ENCODE measurements at regions of chr19 and their contacts with region 1.

Region 1: DNA sequence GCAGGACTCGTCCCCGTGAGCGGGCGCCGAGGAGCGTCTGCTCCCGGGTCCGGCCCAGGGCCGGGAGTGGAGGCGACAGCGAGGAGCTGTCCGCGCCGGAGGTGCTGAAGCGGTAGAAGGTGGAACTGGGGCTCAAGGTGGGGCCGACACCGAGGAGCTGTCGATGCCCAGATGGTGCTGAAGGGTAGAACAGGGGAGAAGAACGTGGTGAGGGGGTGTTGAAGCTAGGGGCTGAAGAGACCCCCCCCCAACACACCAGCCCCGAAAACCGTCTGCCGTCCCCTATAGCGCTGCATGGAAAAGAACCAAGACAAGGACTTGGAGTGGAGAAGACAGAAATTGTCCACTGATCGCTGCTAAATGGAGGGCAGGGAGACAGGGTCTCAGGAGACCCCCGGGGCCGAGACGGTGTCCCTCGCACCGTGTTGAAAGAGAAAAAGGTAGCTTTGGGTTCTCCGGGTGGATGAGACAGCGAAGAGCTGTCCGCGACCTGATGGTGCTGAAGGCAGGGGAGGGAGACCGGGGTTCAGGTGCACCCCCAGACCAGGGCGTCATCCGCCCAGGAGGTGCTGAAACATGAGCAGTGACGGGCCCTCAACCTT is 7.1 kb upstream of the PDE4C start:
- DNase-seq: peak; percentile 93
- ATAC-seq: peak; percentile 79
- H3K4me3 Mint-ChIP-seq: peak overlapping the region; percentile 78
- H3K27ac Mint-ChIP-seq: no peak overlapping the region
- H3K4me1 Mint-ChIP-seq: peaks cover 31% of the 10 kb centered on the region
- H3K27me3 Mint-ChIP-seq: peaks cover 12% of the 10 kb centered on the region
- CTCF ChIP-seq: no peak

Region 2: DNA sequence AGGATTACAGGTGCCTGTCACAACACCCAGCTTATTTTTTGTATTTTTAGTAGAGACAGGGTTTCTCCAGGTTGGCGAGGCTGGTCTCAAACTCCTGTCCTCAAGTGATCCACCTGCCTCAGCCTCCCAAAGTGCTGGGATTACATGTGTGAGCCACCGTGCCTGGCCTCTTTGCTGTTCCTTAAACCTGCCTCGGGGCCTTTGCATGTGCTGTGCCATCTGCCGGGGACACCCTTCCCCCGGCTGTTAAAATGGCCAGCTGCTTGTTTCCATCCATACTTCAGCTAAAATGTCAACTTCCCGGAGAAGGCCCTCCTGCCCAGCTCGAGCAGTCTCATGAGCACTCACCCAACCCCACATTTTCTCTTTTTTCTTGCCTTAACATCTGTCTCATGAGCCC is 12.0 kb after region 1 on chr19:
- CTCF ChIA-PET with region 1: interaction called, 100 read pairs
- POLR2A ChIA-PET with region 1: interaction called, 6 read pairs
- DNase-seq: no peak
- ATAC-seq: no peak
- H3K4me3 Mint-ChIP-seq: no peak overlapping the region
- H3K27ac Mint-ChIP-seq: no peak overlapping the region
- H3K4me1 Mint-ChIP-seq: peaks cover 6% of the 10 kb centered on the region
- H3K27me3 Mint-ChIP-seq: peaks cover 9% of the 10 kb centered on the region; the same call in 1 of the 2 replicates
- CTCF ChIP-seq: no peak

Region 3: GRCh38 chr19:18379803-18380747 is 146.8 kb after region 1 on chr19:
- CTCF ChIA-PET with region 1: no interaction called
- POLR2A ChIA-PET with region 1: no interaction called
- DNase-seq: peak; percentile 27
- ATAC-seq: peak; percentile 74
- H3K4me3 Mint-ChIP-seq: no peak overlapping the region
- H3K27ac Mint-ChIP-seq: peak overlapping the region; percentile 2; the same call in 1 of the 2 replicates
- H3K4me1 Mint-ChIP-seq: peaks cover 20% of the 10 kb centered on the region
- H3K27me3 Mint-ChIP-seq: no peaks in the 10 kb centered on the region; the same call in 1 of the 2 replicates
- CTCF ChIP-seq: no peak

Measured in WTC11 (cell line).